Right cardiac atrium (tissue), 5 donors: ENCODE measurements at regions of chr19 and their contacts with region 1.

Region 1: GRCh38 chr19:17149393-17150135 is 65.6 kb upstream of the USE1 start:
- DNase-seq: no peak
- ATAC-seq: peak; percentile 15 to 45
- H3K4me3 ChIP-seq: no peak overlapping the region
- H3K27ac ChIP-seq: no peak overlapping the region
- H3K4me1 ChIP-seq: no peaks in the 10 kb centered on the region
- H3K27me3 ChIP-seq: no peaks in the 10 kb centered on the region

Region 2: DNA sequence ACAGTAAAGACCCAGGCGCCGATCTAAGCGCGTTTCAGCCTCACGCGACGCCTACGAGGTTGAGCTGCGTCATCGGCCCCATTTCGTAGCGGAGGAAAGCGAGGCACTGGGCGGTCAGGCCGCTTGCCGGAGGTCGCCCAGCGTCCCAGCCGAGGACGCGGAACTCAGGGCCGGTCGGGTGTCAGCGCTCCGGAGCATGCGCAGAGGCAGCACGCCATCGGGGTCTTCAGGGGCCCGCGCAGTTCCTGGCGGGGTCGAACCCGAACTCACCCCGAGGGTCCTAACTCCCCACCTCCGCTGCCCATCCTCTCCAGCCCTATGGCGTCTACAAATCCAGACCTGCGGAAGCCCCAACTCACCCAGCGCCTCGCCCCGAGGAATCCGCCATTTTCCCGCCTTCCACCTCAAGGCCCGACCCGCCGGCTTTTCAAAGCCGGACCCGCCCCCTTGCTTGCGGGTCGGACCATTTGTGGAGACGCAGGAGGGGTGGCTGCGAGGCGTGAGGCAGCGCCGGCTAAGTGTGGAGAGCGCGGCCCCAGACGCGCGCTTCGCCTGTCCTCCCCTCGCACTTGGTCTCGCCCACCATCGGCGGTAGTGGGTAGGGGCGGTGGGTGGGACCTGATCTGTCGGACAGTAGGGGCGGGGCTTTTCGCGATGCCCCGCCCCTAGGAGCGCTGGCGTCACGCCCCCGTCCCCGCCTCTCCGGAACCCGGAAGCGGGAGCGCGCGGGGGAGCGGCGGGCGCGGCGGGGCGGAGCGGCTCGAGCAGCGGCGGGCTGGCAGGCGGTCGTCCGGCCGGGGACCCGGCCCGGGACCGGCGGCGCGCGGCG is 74.3 kb before region 1 on chr19 and contains the starts of genes HAUS8 and MYO9B:
- intact Hi-C with region 1: loop called in 1 of 4 experiments (anchors 10 kb)
- DNase-seq: peak; percentile 100
- ATAC-seq: peak; percentile 95 to 98
- H3K4me3 ChIP-seq: peak within 1 kb of the TSS; percentile 77
- H3K27ac ChIP-seq: peak within 1 kb of the TSS; percentile 82
- H3K4me1 ChIP-seq: peaks cover 14% of the 10 kb centered on the region
- H3K27me3 ChIP-seq: no peaks in the 10 kb centered on the region
- total RNA-seq, gene HAUS8: 3.3 to 6.1 (median 5.6) TPM
- total RNA-seq, gene MYO9B: 31.5 to 42.1 (median 36.6) TPM

Region 3: DNA sequence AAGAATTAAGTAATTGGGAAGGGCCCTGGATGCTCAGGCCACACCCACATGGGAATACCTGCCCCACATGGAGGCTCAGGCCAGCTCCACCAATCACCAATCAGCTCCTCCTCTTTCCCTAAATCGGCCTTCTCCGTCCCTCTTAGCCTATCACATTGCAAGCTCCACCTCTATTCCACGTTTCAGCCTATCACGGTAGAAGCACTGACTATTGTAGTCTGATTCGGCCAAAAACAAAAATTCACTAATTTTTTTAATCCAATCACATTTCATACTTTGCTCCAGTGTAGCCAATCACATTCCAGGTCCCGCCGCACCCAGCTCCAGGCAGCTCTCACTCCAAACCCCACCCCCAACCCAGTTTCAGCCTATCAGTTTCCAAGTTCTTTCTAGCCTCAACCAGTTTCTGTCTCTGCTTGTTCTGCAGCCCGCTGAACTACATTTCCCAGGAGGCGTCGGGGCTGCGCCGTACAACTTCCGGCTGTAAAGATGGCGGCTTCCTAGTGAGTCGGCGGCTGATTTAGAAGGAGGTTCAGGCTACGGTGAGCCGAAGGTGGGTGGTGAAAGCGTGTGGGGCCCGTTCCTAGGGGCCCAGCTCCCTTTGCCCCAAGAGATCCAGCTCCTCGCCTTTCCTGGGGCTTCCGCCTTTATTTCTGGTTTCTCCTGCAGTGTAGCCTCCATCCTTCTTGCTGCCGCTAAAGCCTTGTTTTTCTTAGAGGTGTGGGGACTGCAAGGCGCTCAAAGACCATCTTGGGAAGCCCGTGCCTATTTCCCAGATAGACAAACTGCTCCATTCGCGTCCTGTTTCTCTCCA is 117.6 kb after region 1 on chr19 and contains the start of gene BABAM1:
- intact Hi-C with region 1: no loop called
- DNase-seq: peak; percentile 94 to 97 (median 95)
- ATAC-seq: peak; percentile 97
- H3K4me3 ChIP-seq: peak within 1 kb of the TSS; percentile 93
- H3K27ac ChIP-seq: peak within 1 kb of the TSS; percentile 65
- H3K4me1 ChIP-seq: peaks cover 4% of the 10 kb centered on the region
- H3K27me3 ChIP-seq: no peaks in the 10 kb centered on the region
- total RNA-seq, gene BABAM1: 70.0 to 80.6 (median 75.4) TPM